ENCODE measurements at regions of chr17 and their contacts with region 1.

Region 1: GRCh38 chr17:75271233-75271954 is 363 bp upstream of the MIF4GD start:
- DNase-seq: no peak
- ATAC-seq: peak; percentile 81
- H3K4me3 ChIP-seq: peak overlapping the region; percentile 81 to 86
- H3K27ac ChIP-seq: peak overlapping the region; percentile 78
- H3K4me1 ChIP-seq: peaks cover 36% of the 10 kb centered on the region
- H3K27me3 ChIP-seq: no peaks in the 10 kb centered on the region
- CTCF ChIP-seq: peak; percentile 99

Region 2: GRCh38 chr17:75289115-75289831 is 17.9 kb after region 1 on chr17 and contains the start of gene SLC25A19:
- CTCF ChIA-PET with region 1: interaction called, 11 read pairs
- POLR2A ChIA-PET with region 1: interaction called, 9 read pairs
- in situ Hi-C with region 1: no loop called
- intact Hi-C with region 1: no loop called
- DNase-seq: peak; percentile 96
- ATAC-seq: peak; percentile 99
- H3K4me3 ChIP-seq: peak within 1 kb of the TSS; percentile 77 to 93
- H3K27ac ChIP-seq: peak within 1 kb of the TSS; percentile 90
- H3K4me1 ChIP-seq: peaks cover 5% of the 10 kb centered on the region
- H3K27me3 ChIP-seq: no peaks in the 10 kb centered on the region
- CTCF ChIP-seq: no peak; the same call in 1 of the 2 replicates
- total RNA-seq, gene SLC25A19: 29.0 TPM

Region 3: DNA sequence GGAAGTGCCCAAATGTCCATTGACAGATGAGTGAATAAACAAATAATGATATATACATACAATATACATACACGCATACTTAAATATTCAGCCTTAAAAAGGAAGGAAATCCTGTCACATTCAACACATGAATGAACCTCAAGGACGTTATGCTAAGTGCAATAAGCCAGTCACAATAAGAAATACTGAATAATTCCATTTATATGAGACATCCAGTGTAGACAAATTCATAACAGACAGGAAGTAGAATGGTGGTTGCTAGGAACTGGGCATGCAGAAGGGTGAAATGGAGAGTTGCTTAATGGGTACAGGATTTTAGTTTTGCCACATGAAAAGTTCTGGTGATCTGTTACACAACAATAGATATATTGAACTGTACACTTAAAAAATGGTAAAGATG is 441.1 kb after region 1 on chr17:
- CTCF ChIA-PET with region 1: interaction called, 3 read pairs
- POLR2A ChIA-PET with region 1: interaction called, 14 read pairs
- in situ Hi-C with region 1: no loop called
- intact Hi-C with region 1: no loop called
- DNase-seq: no peak
- ATAC-seq: no peak; the same call in 1 of the 2 replicates
- H3K4me3 ChIP-seq: no peak overlapping the region
- H3K27ac ChIP-seq: no peak overlapping the region
- H3K4me1 ChIP-seq: peaks cover 6% of the 10 kb centered on the region
- H3K27me3 ChIP-seq: no peaks in the 10 kb centered on the region
- CTCF ChIP-seq: no peak